OCI-LY7 (cell line): ENCODE measurements at regions of chr19 and their contacts with region 1.

Region 1: GRCh38 chr19:51417107-51417809 is at the start of gene SIGLEC10:
- DNase-seq: peak; percentile 93
- H3K4me3 ChIP-seq: peak within 1 kb of the TSS; percentile 87
- H3K27ac ChIP-seq: peak within 1 kb of the TSS; percentile 81
- H3K4me1 ChIP-seq: peaks cover 24% of the 10 kb centered on the region
- CTCF ChIP-seq: no peak
- total RNA-seq, gene SIGLEC10: 20.7 and 25.2 TPM in 2 replicates

Region 2: GRCh38 chr19:50686310-50687032 is 730.8 kb before region 1 on chr19:
- CTCF ChIA-PET with region 1: no interaction called
- POLR2A ChIA-PET with region 1: no interaction called
- intact Hi-C with region 1: no loop called
- DNase-seq: no peak
- H3K4me3 ChIP-seq: no peak overlapping the region
- H3K27ac ChIP-seq: no peak overlapping the region
- H3K4me1 ChIP-seq: peaks cover 5% of the 10 kb centered on the region
- CTCF ChIP-seq: no peak

Region 3: DNA sequence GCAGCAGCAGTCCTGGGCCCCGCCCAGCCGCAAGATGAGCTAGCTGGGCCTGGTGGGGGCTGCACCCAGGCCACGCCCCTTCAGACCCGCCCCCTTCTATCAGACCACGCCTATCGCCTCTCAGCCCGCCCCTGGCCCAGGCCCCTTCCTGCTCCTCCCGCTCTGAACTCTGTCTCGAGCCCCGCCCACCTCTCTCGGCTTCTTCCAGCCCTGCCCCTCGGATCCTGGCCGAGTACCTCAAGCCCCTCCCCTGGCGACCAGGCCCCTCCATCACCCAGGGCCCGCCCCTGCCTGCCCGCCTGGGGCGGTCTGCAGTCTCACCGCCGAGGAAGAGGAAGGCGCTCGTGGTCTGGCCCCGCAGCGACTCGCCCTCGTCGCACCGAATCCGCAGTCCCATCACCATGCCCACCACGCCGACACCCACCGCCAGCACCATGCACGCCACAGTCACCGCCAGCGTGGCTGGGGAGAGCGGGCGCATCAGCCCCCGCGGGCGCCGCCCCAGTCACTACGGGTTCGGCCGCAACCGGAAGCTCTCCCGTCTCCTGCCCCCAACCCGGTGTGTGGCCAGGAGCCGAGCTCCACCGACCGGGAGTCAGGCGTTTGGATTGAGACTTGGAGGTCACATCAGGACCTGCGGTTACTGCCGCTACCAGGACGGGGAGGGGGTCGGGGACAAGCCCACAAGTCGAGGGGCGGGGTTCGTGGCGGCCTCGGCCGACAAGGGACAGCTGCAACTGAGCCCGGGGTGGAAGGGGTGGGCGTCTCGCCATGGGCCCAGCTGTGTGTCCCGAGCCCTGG is 49.5 kb before region 1 on chr19:
- CTCF ChIA-PET with region 1: interaction called, 3 read pairs
- POLR2A ChIA-PET with region 1: interaction called, 4 read pairs
- intact Hi-C with region 1: loop called (anchors 2 kb)
- DNase-seq: peak; percentile 98
- H3K4me3 ChIP-seq: peak overlapping the region; percentile 78
- H3K27ac ChIP-seq: peak overlapping the region; percentile 79
- H3K4me1 ChIP-seq: peaks cover 32% of the 10 kb centered on the region
- CTCF ChIP-seq: no peak

Region 4: GRCh38 chr19:51393959-51394836 is 23.1 kb before region 1 on chr19:
- CTCF ChIA-PET with region 1: interaction called, 3 read pairs
- POLR2A ChIA-PET with region 1: interaction called, 11 read pairs
- intact Hi-C with region 1: loop called (anchors 1 kb)
- DNase-seq: peak; percentile 100
- H3K4me3 ChIP-seq: peak overlapping the region; percentile 85
- H3K27ac ChIP-seq: peak overlapping the region; percentile 93
- H3K4me1 ChIP-seq: peaks cover 30% of the 10 kb centered on the region
- CTCF ChIP-seq: peak; percentile 30; the same call in 1 of the 2 replicates

Region 5: DNA sequence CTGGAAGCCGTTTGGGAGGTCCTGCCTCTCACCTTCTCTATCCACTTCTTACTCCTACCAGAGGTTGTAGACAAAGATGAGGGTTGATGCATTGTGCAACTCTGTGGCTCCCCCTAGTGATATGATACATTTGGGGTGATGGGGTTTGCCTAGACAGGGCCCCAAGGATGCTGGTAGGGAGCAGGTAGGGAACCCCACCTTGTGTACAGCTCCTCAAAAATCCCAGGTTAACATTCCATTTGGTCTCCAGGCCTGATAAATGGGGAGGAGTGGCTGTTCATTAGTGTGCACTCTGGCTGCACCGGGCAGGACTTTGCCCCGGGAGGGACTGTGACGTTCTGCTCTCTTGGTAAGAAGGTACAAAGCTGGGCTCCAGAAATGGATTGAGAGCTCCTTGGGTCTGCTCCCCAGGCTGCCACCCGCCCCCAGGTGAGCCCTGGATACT is 21.8 kb after region 1 on chr19:
- CTCF ChIA-PET with region 1: no interaction called
- POLR2A ChIA-PET with region 1: no interaction called
- intact Hi-C with region 1: loop called (anchors 1 kb)
- DNase-seq: peak; percentile 58
- H3K4me3 ChIP-seq: no peak overlapping the region
- H3K27ac ChIP-seq: no peak overlapping the region
- H3K4me1 ChIP-seq: peaks cover 18% of the 10 kb centered on the region
- CTCF ChIP-seq: peak; percentile 84